Tibial artery (tissue), 4 donors: ENCODE measurements at regions of chr10 and their contacts with region 1.

Region 1: GRCh38 chr10:31759799-31760626 is 168.6 kb downstream of the ARHGAP12 start:
- DNase-seq: peak; percentile 97 to 98
- H3K4me3 ChIP-seq: peak overlapping the region; percentile 77 to 97
- H3K27ac ChIP-seq: peak overlapping the region; percentile 95 to 97
- H3K4me1 ChIP-seq: peaks cover 0 to 34% (median 15%) of the 10 kb centered on the region in 4 donors
- H3K27me3 ChIP-seq: no peaks in the 10 kb centered on the region
- CTCF ChIP-seq: no peak

Region 2: GRCh38 chr10:31318854-31319601 is 441.0 kb before region 1 on chr10 and contains the start of gene ZEB1:
- intact Hi-C with region 1: loop called (anchors 10 kb)
- DNase-seq: peak; percentile 91 to 94
- H3K4me3 ChIP-seq: peak within 1 kb of the TSS; percentile 98 to 99
- H3K27ac ChIP-seq: peak within 1 kb of the TSS; percentile 97 to 98
- H3K4me1 ChIP-seq: peaks cover 0 to 25% (median 6%) of the 10 kb centered on the region in 4 donors
- H3K27me3 ChIP-seq: no peaks in the 10 kb centered on the region
- CTCF ChIP-seq: peak; percentile 50 to 61

Region 3: GRCh38 chr10:31603235-31604087 is 156.6 kb before region 1 on chr10:
- intact Hi-C with region 1: loop called (anchors 2 kb)
- DNase-seq: peak; percentile 95 to 99
- H3K4me3 ChIP-seq: peak overlapping the region; percentile 73 to 78
- H3K27ac ChIP-seq: peak overlapping the region; percentile 83 to 94
- H3K4me1 ChIP-seq: peaks cover 0 to 11% (median 5%) of the 10 kb centered on the region in 4 donors
- H3K27me3 ChIP-seq: no peaks in the 10 kb centered on the region
- CTCF ChIP-seq: peak in 1 of 2 experiments; percentile 36

Region 4: GRCh38 chr10:31650010-31650409 is 110.0 kb before region 1 on chr10:
- intact Hi-C with region 1: loop called (anchors 5 kb)
- DNase-seq: peak; percentile 91 to 95
- H3K4me3 ChIP-seq: peak overlapping the region; percentile 39 to 49
- H3K27ac ChIP-seq: peak overlapping the region; percentile 80
- H3K4me1 ChIP-seq: peaks cover 0 to 16% (median 8%) of the 10 kb centered on the region in 4 donors
- H3K27me3 ChIP-seq: no peaks in the 10 kb centered on the region
- CTCF ChIP-seq: no peak

Region 5: GRCh38 chr10:31697271-31698180 is 62.5 kb before region 1 on chr10:
- intact Hi-C with region 1: loop called (anchors 5 kb)
- DNase-seq: peak; percentile 94 to 95
- H3K4me3 ChIP-seq: peak overlapping the region; percentile 35 to 46
- H3K27ac ChIP-seq: peak overlapping the region; percentile 84 to 93
- H3K4me1 ChIP-seq: peaks cover 0 to 63% (median 42%) of the 10 kb centered on the region in 4 donors
- H3K27me3 ChIP-seq: no peaks in the 10 kb centered on the region
- CTCF ChIP-seq: no peak